Ovary (tissue), 10 donors: ENCODE measurements at regions of chr3 and their contacts with region 1.

Region 1: DNA sequence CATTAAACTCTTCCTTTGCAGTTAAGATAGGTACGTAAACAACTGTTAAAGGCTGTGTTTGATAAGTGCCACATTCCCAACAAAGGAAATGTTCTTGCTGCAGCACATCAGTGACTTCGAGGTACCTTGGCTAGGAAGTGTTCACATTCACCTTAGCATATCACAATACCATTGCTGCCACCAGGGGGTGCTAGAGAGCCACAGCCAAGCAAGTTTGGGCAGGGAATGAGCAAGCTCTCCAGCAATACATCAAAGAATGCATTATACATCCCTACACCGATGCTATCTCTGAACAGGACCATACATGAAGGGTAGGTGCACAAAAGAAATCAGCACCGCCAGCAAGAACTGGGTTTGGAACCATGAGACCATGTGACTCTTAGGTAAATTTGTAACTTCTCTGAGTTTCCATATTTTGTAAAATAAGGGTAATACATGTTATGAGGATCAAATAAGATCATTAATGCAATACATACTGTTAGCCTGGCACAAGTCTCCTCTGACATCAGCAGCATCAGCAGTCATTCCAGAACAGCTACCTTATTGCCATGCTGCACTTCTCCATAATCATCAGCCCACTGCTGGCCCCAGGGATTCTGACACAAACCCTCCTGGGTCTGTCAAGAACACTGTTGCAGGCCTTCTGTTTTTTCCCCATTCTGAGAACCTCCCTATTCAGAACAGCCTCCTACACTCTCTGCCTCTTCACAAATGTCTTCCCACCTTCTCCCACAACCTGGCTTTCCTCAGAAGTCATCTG is 37.6 kb downstream of the RYK start:
- DNase-seq: peak; percentile 77 to 89 (median 88)
- H3K4me3 ChIP-seq: no peak overlapping the region
- H3K27ac ChIP-seq: no peak overlapping the region
- H3K4me1 ChIP-seq: peaks cover 8% of the 10 kb centered on the region
- H3K27me3 ChIP-seq: no peaks in the 10 kb centered on the region
- CTCF ChIP-seq: peak; percentile 93 to 98 (median 94)
- EP300 ChIP-seq: no peak
- POLR2A ChIP-seq: no peak

Region 2: GRCh38 chr3:134300515-134300914 is 87.4 kb after region 1 on chr3:
- intact Hi-C with region 1: loop called (anchors 2 to 5 kb)
- DNase-seq: no peak
- H3K4me3 ChIP-seq: no peak overlapping the region
- H3K27ac ChIP-seq: no peak overlapping the region
- H3K4me1 ChIP-seq: no peaks in the 10 kb centered on the region
- H3K27me3 ChIP-seq: no peaks in the 10 kb centered on the region
- CTCF ChIP-seq: no peak
- EP300 ChIP-seq: no peak
- POLR2A ChIP-seq: no peak

Region 3: GRCh38 chr3:134473868-134474546 is 260.9 kb after region 1 on chr3:
- intact Hi-C with region 1: loop called (anchors 5 to 10 kb)
- DNase-seq: peak; percentile 65 to 87 (median 73)
- H3K4me3 ChIP-seq: no peak overlapping the region
- H3K27ac ChIP-seq: no peak overlapping the region
- H3K4me1 ChIP-seq: no peaks in the 10 kb centered on the region
- H3K27me3 ChIP-seq: no peaks in the 10 kb centered on the region
- CTCF ChIP-seq: peak; percentile 60 to 89 (median 87)
- EP300 ChIP-seq: no peak
- POLR2A ChIP-seq: no peak